CD4-positive, alpha-beta T cell (primary cell): ENCODE measurements at regions of chr10 and their contacts with region 1.

Region 1: DNA sequence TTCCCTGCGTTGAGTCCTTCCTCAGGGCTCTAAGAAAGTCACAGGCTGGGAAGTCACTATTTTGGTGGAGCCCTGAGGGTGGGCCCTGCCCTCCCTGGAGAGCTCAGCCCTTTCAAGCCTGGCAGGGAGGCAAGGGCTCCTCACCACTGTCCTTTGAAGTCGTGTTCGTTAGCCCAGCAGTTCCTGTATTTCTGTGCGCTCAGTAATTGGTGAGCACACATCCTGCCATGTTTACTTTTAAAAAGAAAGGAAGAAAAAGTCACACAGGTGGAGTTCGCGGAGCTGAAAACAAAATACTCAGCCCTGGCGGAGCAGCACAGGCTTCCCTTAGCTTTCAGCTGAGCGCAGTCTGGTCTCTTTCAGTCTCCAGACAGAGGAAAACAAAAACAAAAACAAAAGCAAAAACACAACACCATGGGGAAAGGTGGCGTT is 37.1 kb downstream of the PRKCQ start:
- DNase-seq: peak; percentile 37 to 85 (median 58)
- ATAC-seq: peak; percentile 84
- H3K4me3 ChIP-seq: peak overlapping the region; percentile 47
- H3K4me3 Mint-ChIP-seq: peak overlapping the region; percentile 89
- H3K27ac ChIP-seq: peak overlapping the region; percentile 86 to 88
- H3K27ac Mint-ChIP-seq: peak overlapping the region; percentile 97
- H3K4me1 ChIP-seq: peaks cover 73% of the 10 kb centered on the region
- H3K4me1 Mint-ChIP-seq: peaks cover 86% of the 10 kb centered on the region
- H3K27me3 ChIP-seq: no peaks in the 10 kb centered on the region
- H3K27me3 Mint-ChIP-seq: no peaks in the 10 kb centered on the region
- CTCF ChIP-seq: no peak

Region 2: GRCh38 chr10:6473901-6474370 is 69.1 kb before region 1 on chr10:
- CTCF ChIA-PET with region 1: interaction called, 6 read pairs
- POLR2A ChIA-PET with region 1: interaction called, 10 read pairs
- intact Hi-C with region 1: loop called in 1 of 2 experiments (anchors 1 kb)
- DNase-seq: peak in 6 of 14 experiments; percentile 25 to 85 (median 56)
- ATAC-seq: peak; percentile 75
- H3K4me3 ChIP-seq: peak overlapping the region; percentile 47
- H3K4me3 Mint-ChIP-seq: peak overlapping the region; percentile 83
- H3K27ac ChIP-seq: peak overlapping the region; percentile 69 to 75
- H3K27ac Mint-ChIP-seq: peak overlapping the region; percentile 95
- H3K4me1 ChIP-seq: peaks cover 23% of the 10 kb centered on the region
- H3K4me1 Mint-ChIP-seq: peaks cover 65% of the 10 kb centered on the region
- H3K27me3 ChIP-seq: no peaks in the 10 kb centered on the region
- H3K27me3 Mint-ChIP-seq: no peaks in the 10 kb centered on the region
- CTCF ChIP-seq: no peak

Region 3: DNA sequence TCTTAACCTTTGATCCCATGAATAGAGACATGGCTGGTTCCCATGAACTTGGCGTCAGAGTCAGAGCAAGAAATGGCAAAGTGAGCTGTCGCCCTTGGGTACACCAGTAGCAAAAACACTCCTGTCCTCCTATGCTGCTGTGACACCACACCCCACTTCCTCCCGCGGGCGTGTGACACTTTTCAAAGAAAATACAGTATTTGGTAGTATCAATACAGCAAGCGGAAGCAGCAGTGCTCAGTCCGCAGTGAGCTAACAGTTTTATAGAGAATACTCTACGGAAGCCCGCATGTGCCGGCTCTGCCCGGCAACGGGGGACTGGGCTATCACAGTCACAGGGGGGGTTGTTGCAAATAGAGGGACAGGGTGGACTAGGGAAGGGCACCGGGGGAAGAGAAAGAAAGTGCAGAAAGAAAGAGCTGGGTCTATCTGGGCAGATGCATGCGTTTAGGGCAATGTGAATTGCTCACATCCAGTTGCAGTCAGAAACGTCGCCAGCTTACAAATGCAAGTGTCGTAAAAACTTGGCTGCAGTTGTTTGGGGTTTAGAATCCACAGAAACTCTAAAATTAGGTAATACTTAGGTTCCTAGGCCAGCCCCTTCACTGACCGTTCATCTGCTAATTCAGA is 12.7 kb before region 1 on chr10:
- CTCF ChIA-PET with region 1: interaction called, 14 read pairs
- POLR2A ChIA-PET with region 1: interaction called, 124 read pairs
- intact Hi-C with region 1: loop called (anchors 1 to 2 kb)
- DNase-seq: peak; percentile 61 to 94 (median 77)
- ATAC-seq: peak; percentile 97
- H3K4me3 ChIP-seq: peak overlapping the region; percentile 48
- H3K4me3 Mint-ChIP-seq: peak overlapping the region; percentile 86
- H3K27ac ChIP-seq: peak overlapping the region; percentile 85 to 86
- H3K27ac Mint-ChIP-seq: peak overlapping the region; percentile 95
- H3K4me1 ChIP-seq: peaks cover 73% of the 10 kb centered on the region
- H3K4me1 Mint-ChIP-seq: peaks cover 85% of the 10 kb centered on the region
- H3K27me3 ChIP-seq: no peaks in the 10 kb centered on the region
- H3K27me3 Mint-ChIP-seq: no peaks in the 10 kb centered on the region
- CTCF ChIP-seq: no peak

Region 4: DNA sequence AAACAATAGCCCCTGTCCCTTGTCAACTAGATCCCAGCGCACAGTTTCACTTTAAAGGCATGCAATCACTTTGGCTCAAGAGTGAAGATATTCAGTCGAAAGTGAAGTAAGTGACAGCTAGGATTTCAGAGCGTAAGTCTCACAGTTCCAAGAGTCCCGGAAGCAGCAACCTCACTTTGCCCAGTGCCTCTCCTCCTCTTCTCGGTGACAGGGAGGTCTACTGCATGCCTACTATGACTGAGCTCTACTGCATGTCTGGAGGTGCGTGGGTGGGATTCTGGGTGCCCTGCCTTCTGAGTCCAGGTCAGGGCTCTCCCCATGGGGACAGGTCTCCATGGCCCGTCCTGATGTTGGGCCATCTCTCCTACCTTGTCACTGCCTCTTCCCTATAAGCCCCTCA is 20.1 kb after region 1 on chr10:
- CTCF ChIA-PET with region 1: interaction called, 17 read pairs
- POLR2A ChIA-PET with region 1: interaction called, 38 read pairs
- intact Hi-C with region 1: loop called in 1 of 2 experiments (anchors 1 kb)
- DNase-seq: peak in 6 of 14 experiments; percentile 13 to 64 (median 50)
- ATAC-seq: peak; percentile 58
- H3K4me3 ChIP-seq: peak overlapping the region; percentile 21
- H3K4me3 Mint-ChIP-seq: peak overlapping the region; percentile 82
- H3K27ac ChIP-seq: peak overlapping the region; percentile 50 to 66
- H3K27ac Mint-ChIP-seq: peak overlapping the region; percentile 81
- H3K4me1 ChIP-seq: peaks cover 71% of the 10 kb centered on the region
- H3K4me1 Mint-ChIP-seq: peaks cover 90% of the 10 kb centered on the region
- H3K27me3 ChIP-seq: no peaks in the 10 kb centered on the region
- H3K27me3 Mint-ChIP-seq: no peaks in the 10 kb centered on the region
- CTCF ChIP-seq: no peak

Region 5: GRCh38 chr10:6601246-6601805 is 58.3 kb after region 1 on chr10:
- CTCF ChIA-PET with region 1: interaction called, 13 read pairs
- POLR2A ChIA-PET with region 1: interaction called, 4 read pairs
- intact Hi-C with region 1: no loop called
- DNase-seq: peak in 8 of 14 experiments; percentile 36 to 60 (median 54)
- ATAC-seq: peak; percentile 67
- H3K4me3 ChIP-seq: no peak overlapping the region
- H3K4me3 Mint-ChIP-seq: peak overlapping the region; percentile 71
- H3K27ac ChIP-seq: no peak overlapping the region
- H3K27ac Mint-ChIP-seq: peak overlapping the region; percentile 83
- H3K4me1 ChIP-seq: peaks cover 35% of the 10 kb centered on the region
- H3K4me1 Mint-ChIP-seq: peaks cover 80% of the 10 kb centered on the region
- H3K27me3 ChIP-seq: no peaks in the 10 kb centered on the region
- H3K27me3 Mint-ChIP-seq: no peaks in the 10 kb centered on the region
- CTCF ChIP-seq: peak; percentile 79